Activated CD4-positive, alpha-beta memory T cell treated with anti-CD3 and anti-CD28 coated beads for 36 hours (primary cell): ENCODE measurements at regions of chr3 and their contacts with region 1.

Region 1: DNA sequence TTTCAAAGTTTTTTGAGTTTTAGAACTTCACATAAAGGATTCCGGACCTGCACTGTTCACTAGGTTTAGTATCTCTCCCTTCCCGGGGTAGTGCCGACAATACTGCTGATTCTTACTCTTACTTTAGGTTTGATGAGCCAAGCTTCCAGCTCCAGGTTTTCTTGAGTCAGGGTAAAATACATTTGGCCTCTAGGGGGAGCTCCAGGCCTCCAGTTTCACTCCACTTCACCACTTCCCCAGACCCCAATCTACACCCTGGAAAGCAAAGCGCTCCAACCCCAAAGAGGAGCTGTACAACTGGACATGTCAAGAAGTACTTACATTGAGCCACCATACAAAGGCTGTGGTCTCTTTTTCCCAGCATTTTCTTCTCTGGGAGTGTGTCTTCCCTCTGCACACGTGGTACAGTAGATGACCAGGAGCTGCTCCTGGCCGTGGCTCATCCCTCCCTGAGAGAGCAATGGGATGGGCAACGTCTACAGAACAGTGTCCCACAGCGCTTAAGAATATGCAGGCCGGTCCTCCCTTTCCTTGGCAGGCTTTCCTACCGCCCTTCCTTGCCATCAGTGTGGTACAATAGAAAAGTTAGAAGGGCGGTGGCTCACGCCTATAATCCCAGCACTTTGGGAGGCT is 93.9 kb upstream of the CCDC80 start:
- DNase-seq: peak; percentile 73
- H3K4me3 Mint-ChIP-seq: no peak overlapping the region
- H3K27ac Mint-ChIP-seq: no peak overlapping the region
- H3K4me1 Mint-ChIP-seq: peaks cover 42% of the 10 kb centered on the region
- H3K27me3 Mint-ChIP-seq: no peaks in the 10 kb centered on the region

Region 2: GRCh38 chr3:112555535-112556170 is 179.2 kb before region 1 on chr3:
- CTCF ChIA-PET with region 1: no interaction called
- POLR2A ChIA-PET with region 1: no interaction called
- intact Hi-C with region 1: no loop called
- DNase-seq: no peak
- H3K4me3 Mint-ChIP-seq: no peak overlapping the region
- H3K27ac Mint-ChIP-seq: no peak overlapping the region
- H3K4me1 Mint-ChIP-seq: peaks cover 48% of the 10 kb centered on the region
- H3K27me3 Mint-ChIP-seq: no peaks in the 10 kb centered on the region

Region 3: GRCh38 chr3:112642912-112643506 is 91.8 kb before region 1 on chr3:
- CTCF ChIA-PET with region 1: interaction called, 58 read pairs
- POLR2A ChIA-PET with region 1: no interaction called
- intact Hi-C with region 1: loop called (anchors 1 kb)
- DNase-seq: peak; percentile 89
- H3K4me3 Mint-ChIP-seq: peak overlapping the region; percentile 63
- H3K27ac Mint-ChIP-seq: no peak overlapping the region
- H3K4me1 Mint-ChIP-seq: peaks cover 16% of the 10 kb centered on the region
- H3K27me3 Mint-ChIP-seq: peaks cover 3% of the 10 kb centered on the region

Region 4: GRCh38 chr3:112751564-112752512 is 17.0 kb after region 1 on chr3:
- CTCF ChIA-PET with region 1: interaction called, 17 read pairs
- POLR2A ChIA-PET with region 1: no interaction called
- intact Hi-C with region 1: no loop called
- DNase-seq: no peak
- H3K4me3 Mint-ChIP-seq: no peak overlapping the region
- H3K27ac Mint-ChIP-seq: no peak overlapping the region
- H3K4me1 Mint-ChIP-seq: peaks cover 12% of the 10 kb centered on the region
- H3K27me3 Mint-ChIP-seq: no peaks in the 10 kb centered on the region

Region 5: GRCh38 chr3:112858410-112859069 is 123.7 kb after region 1 on chr3:
- CTCF ChIA-PET with region 1: interaction called, 4 read pairs
- POLR2A ChIA-PET with region 1: no interaction called
- intact Hi-C with region 1: loop called (anchors 5 kb)
- DNase-seq: peak; percentile 32
- H3K4me3 Mint-ChIP-seq: peak overlapping the region; percentile 43
- H3K27ac Mint-ChIP-seq: peak overlapping the region; percentile 54
- H3K4me1 Mint-ChIP-seq: peaks cover 28% of the 10 kb centered on the region
- H3K27me3 Mint-ChIP-seq: no peaks in the 10 kb centered on the region

Region 6: GRCh38 chr3:112966633-112967032 is 231.8 kb after region 1 on chr3:
- CTCF ChIA-PET with region 1: interaction called, 69 read pairs
- POLR2A ChIA-PET with region 1: interaction called, 3 read pairs
- intact Hi-C with region 1: no loop called
- DNase-seq: no peak
- H3K4me3 Mint-ChIP-seq: no peak overlapping the region
- H3K27ac Mint-ChIP-seq: no peak overlapping the region
- H3K4me1 Mint-ChIP-seq: peaks cover 61% of the 10 kb centered on the region
- H3K27me3 Mint-ChIP-seq: no peaks in the 10 kb centered on the region

Region 7: GRCh38 chr3:112990672-112991602 is 256.1 kb after region 1 on chr3 and contains the start of gene GTPBP8:
- CTCF ChIA-PET with region 1: interaction called, 30 read pairs
- POLR2A ChIA-PET with region 1: no interaction called
- intact Hi-C with region 1: no loop called
- DNase-seq: peak; percentile 93
- H3K4me3 Mint-ChIP-seq: peak within 1 kb of the TSS; percentile 91
- H3K27ac Mint-ChIP-seq: peak within 1 kb of the TSS; percentile 94
- H3K4me1 Mint-ChIP-seq: peaks cover 57% of the 10 kb centered on the region
- H3K27me3 Mint-ChIP-seq: no peaks in the 10 kb centered on the region
- total RNA-seq, gene GTPBP8: 34.7 to 35.7 TPM